Right lobe of liver (tissue), 6 donors: ENCODE measurements at regions of chr6 and their contacts with region 1.

Region 1: DNA sequence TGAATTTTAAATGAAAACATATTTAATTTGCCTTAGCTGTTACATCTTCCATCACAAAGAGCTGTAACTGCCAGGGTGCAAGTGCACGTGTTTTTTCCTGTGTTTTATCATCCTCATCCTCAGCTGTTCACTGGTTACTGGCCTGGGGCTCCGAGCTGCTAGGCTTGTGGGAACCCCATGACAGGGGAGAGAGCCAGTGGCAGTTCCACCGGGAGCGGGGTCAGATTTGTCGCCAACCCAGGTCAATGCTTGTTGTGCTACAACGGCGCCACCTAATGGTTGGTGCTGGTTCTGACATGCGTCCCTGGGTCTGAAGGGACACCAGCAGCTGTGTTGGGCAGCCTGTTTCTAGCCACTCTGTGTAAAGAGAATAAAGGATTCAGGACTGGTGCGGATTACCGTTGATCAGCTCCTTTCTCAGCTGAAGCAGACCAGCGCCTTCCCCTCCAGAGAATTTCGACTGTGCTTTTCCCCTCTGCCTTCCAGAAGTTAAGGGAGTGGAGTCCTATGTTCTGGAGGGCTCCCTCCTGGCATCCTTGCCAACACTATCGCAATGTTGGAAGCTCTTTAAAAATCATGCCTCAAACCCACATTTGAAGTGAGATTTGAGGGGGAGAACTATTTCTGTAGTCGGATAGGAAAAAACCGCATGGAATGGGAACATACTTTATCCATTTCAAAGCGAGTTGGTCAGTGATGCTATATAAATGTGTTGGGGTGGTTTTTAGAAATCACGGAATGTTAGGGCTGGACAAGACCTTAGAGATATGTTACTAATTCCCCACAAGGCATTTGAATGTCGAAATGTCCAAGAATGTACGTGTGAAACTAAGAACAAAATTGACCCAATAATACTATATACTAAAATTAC is 32.1 kb downstream of the SUMO4 start:
- DNase-seq: peak; percentile 87 to 90 (median 87)
- ATAC-seq: peak; percentile 97 to 99 (median 98)
- H3K4me3 ChIP-seq: no peak overlapping the region
- H3K27ac ChIP-seq: no peak overlapping the region
- H3K4me1 ChIP-seq: no peaks in the 10 kb centered on the region
- H3K27me3 ChIP-seq: no peaks in the 10 kb centered on the region
- CTCF ChIP-seq: peak; percentile 94 to 97 (median 96)
- POLR2A ChIP-seq: no peak

Region 2: GRCh38 chr6:149028767-149029405 is 403.3 kb before region 1 on chr6:
- intact Hi-C with region 1: loop called in 1 of 2 experiments (anchors 10 kb)
- DNase-seq: peak in 1 of 3 donors; percentile 76
- ATAC-seq: peak; percentile 74 to 90 (median 83)
- H3K4me3 ChIP-seq: no peak overlapping the region
- H3K27ac ChIP-seq: no peak overlapping the region
- H3K4me1 ChIP-seq: peaks cover 0 to 16% (median 8%) of the 10 kb centered on the region in 4 donors
- H3K27me3 ChIP-seq: no peaks in the 10 kb centered on the region
- CTCF ChIP-seq: peak; percentile 67 to 89 (median 74)
- POLR2A ChIP-seq: no peak

Region 3: DNA sequence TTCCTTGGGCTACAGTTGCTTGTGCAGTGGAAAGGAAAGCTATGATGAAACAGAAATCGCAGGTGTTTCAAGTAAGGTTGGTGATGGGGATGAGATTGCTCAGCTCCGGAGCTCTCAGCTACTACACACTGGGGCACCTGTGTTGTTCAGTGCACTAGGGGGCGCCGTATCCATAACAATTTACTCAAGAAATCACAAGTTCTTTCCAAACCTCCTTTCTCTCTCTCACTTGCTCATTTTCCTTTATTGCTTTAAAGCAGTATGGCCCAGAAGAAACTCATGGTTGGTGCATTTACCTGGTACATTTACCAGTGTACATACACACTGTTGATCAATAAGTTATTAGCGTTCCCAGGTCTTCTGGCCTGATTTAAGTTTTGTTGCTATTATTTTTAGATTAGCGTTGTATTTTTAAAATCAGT is 349.8 kb before region 1 on chr6:
- intact Hi-C with region 1: loop called in 1 of 2 experiments (anchors 10 kb)
- DNase-seq: peak; percentile 67 to 80 (median 75)
- ATAC-seq: peak; percentile 95 to 96 (median 96)
- H3K4me3 ChIP-seq: no peak overlapping the region
- H3K27ac ChIP-seq: no peak overlapping the region
- H3K4me1 ChIP-seq: peaks cover 0 to 5% (median under 1%) of the 10 kb centered on the region in 4 donors
- H3K27me3 ChIP-seq: no peaks in the 10 kb centered on the region
- CTCF ChIP-seq: peak; percentile 85 to 87 (median 86)
- POLR2A ChIP-seq: no peak

Region 4: DNA sequence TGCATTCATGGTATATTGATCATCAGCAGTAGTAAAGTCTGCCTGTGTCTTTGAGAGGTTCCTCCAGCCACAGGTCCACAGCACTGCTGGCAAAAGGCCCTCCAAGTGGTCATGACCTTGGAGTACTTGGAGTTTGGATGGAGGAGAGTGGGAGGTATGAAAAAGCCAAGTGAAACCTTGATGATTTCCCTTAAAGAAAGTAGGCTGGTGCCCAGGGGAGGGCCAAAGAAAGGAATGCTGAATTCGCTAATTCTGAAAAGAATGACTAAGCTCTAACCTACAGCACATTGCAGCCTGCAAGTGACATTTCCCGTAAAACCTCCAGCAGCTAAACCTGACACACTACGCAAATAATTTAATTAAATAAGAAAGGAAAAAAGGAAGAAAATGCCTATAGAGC is 338.0 kb before region 1 on chr6:
- intact Hi-C with region 1: loop called (anchors 5 to 10 kb)
- DNase-seq: no peak
- ATAC-seq: peak in 2 of 4 donors; percentile 29 to 36
- H3K4me3 ChIP-seq: no peak overlapping the region
- H3K27ac ChIP-seq: no peak overlapping the region
- H3K4me1 ChIP-seq: no peaks in the 10 kb centered on the region
- H3K27me3 ChIP-seq: no peaks in the 10 kb centered on the region
- CTCF ChIP-seq: no peak
- POLR2A ChIP-seq: no peak